ENCODE measurements at regions of chr12 and their contacts with region 1.

Region 1: GRCh38 chr12:15522565-15523187 is 200.4 kb downstream of the PTPRO start:
- DNase-seq: peak; percentile 43
- H3K4me3 ChIP-seq: no peak overlapping the region
- H3K27ac ChIP-seq: no peak overlapping the region
- H3K4me1 ChIP-seq: no peaks in the 10 kb centered on the region
- H3K27me3 ChIP-seq: no peaks in the 10 kb centered on the region
- CTCF ChIP-seq: peak; percentile 79
- EP300 ChIP-seq: no peak
- RAD21 ChIP-seq: peak; percentile 93

Region 2: DNA sequence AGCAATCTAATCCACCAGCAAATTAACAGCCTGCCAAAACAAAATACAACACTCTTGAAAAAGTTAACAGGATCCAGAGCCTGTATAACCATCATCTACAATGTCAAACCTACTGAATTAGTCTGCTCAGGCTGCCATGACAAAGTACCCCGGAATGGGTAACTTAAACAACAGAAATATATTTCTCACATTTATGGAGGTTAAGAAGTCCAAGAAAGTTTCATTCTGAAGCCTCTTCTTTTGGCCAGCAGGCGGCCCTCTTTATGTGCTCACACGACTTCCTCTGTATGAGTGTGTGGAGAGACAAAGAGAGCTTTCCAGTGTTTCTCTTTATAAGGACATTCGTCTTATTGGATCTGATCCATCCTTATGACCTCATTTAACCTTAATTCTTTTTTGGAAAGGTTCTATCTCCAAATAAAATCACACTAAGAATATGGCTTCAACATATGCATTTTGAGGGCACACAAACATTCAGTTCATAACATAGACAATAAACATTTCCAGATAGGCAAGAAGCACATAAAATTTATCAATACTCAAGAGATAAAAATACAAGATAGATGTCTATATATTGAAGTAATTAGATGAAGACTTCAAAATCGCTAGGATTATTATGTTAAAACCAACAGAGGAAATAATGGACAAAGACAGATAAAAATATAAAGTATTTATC is 295.5 kb before region 1 on chr12:
- CTCF ChIA-PET with region 1: interaction called, 13 read pairs
- POLR2A ChIA-PET with region 1: no interaction called
- DNase-seq: peak; percentile 26
- H3K4me3 ChIP-seq: peak overlapping the region in 1 of 2 experiments; percentile 22; a peak in 1 of 4 replicates
- H3K27ac ChIP-seq: no peak overlapping the region
- H3K4me1 ChIP-seq: no peaks in the 10 kb centered on the region; a peak in 1 of 4 replicates
- H3K27me3 ChIP-seq: peaks cover 9% of the 10 kb centered on the region; the same call in 1 of the 2 replicates
- CTCF ChIP-seq: peak; percentile 80
- EP300 ChIP-seq: no peak
- RAD21 ChIP-seq: peak; percentile 60

Region 3: GRCh38 chr12:16238661-16239060 is 716.0 kb after region 1 on chr12:
- CTCF ChIA-PET with region 1: no interaction called
- POLR2A ChIA-PET with region 1: no interaction called
- DNase-seq: no peak
- H3K4me3 ChIP-seq: no peak overlapping the region
- H3K27ac ChIP-seq: no peak overlapping the region
- H3K4me1 ChIP-seq: no peaks in the 10 kb centered on the region
- H3K27me3 ChIP-seq: 0 out of 2 replicates have a peak, but pooled peaks cover 7% of the 10 kb centered on the region
- CTCF ChIP-seq: no peak
- EP300 ChIP-seq: no peak
- RAD21 ChIP-seq: no peak